CD4-positive, alpha-beta T cell (primary cell): ENCODE measurements at regions of chr6 and their contacts with region 1.

Region 1: DNA sequence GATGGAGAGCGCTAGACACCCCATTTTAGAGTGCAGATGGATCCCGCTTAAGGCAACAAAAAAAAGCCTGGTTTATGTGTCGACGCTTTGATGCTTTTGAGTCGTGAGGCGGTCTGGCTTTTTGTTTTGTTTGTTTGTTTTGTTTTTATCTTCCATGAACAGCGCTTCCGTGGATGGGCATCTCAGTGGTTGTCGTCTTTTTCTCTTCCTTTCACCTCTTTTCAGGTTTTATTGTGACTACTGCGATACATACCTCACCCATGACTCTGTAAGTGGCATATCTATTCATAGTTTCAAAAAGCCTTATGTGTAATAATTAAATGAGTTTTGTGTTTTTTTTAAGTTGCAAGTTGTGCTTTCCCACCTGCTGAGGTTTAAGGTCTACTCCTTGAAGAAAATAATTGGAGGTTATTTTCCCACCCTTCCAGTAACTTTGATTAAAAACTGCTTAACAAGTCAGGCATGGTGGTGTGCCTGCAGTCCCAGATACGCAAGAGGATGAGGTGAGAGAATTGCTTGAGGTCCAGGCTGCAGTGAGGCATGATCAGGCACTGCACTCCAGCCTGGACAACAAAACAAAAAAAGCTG is 476 bp downstream of the SNRPC start:
- DNase-seq: no peak
- ATAC-seq: no peak
- H3K4me3 ChIP-seq: peak overlapping the region; percentile 67
- H3K4me3 Mint-ChIP-seq: no peak overlapping the region
- H3K27ac ChIP-seq: peak overlapping the region; percentile 84 to 88
- H3K27ac Mint-ChIP-seq: no peak overlapping the region
- H3K4me1 ChIP-seq: peaks cover 19% of the 10 kb centered on the region
- H3K4me1 Mint-ChIP-seq: peaks cover 9% of the 10 kb centered on the region
- H3K27me3 ChIP-seq: no peaks in the 10 kb centered on the region
- H3K27me3 Mint-ChIP-seq: no peaks in the 10 kb centered on the region
- CTCF ChIP-seq: no peak

Region 2: DNA sequence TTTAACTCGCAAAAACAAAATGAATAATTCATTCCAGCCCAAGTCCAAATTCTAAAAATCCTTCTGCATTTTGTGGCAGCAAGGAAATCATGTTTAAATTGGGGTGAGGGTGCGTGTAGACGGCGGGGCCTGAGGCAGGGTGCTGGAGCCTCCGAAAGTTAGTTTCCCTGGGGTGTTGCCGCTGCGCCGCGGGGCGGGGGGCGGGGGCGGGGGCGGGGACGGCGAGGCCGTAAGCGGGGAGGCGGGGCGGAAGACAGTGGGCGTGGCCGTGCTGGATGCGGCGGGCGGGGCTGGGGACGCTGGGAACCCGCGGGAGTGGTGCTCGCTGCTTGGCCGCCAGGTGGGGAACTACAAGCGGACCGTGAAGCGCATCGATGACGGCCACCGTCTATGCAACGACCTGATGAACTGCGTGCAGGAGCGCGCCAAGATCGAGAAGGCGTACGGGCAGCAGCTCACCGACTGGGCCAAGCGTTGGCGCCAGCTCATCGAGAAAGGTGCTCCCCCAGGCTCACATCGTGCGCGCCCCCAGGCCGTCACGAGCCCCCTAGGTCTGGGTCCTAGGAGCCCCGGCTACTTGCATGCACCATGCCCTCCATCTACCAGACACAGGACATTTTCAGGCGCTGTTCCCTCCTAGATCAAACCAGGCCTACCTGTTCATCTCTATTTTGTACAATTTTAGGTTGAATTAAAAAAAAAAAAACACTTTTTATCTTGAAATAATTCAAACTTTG is 230.6 kb before region 1 on chr6:
- CTCF ChIA-PET with region 1: no interaction called
- POLR2A ChIA-PET with region 1: no interaction called
- intact Hi-C with region 1: loop called in 1 of 2 experiments (anchors 2 kb)
- DNase-seq: peak; percentile 94 to 99 (median 97)
- ATAC-seq: peak; percentile 98
- H3K4me3 ChIP-seq: peak overlapping the region; percentile 26
- H3K4me3 Mint-ChIP-seq: peak overlapping the region; percentile 54
- H3K27ac ChIP-seq: no peak overlapping the region
- H3K27ac Mint-ChIP-seq: peak overlapping the region; percentile 75
- H3K4me1 ChIP-seq: peaks cover 15% of the 10 kb centered on the region
- H3K4me1 Mint-ChIP-seq: peaks cover 11% of the 10 kb centered on the region
- H3K27me3 ChIP-seq: no peaks in the 10 kb centered on the region
- H3K27me3 Mint-ChIP-seq: no peaks in the 10 kb centered on the region
- CTCF ChIP-seq: peak; percentile 78

Region 3: DNA sequence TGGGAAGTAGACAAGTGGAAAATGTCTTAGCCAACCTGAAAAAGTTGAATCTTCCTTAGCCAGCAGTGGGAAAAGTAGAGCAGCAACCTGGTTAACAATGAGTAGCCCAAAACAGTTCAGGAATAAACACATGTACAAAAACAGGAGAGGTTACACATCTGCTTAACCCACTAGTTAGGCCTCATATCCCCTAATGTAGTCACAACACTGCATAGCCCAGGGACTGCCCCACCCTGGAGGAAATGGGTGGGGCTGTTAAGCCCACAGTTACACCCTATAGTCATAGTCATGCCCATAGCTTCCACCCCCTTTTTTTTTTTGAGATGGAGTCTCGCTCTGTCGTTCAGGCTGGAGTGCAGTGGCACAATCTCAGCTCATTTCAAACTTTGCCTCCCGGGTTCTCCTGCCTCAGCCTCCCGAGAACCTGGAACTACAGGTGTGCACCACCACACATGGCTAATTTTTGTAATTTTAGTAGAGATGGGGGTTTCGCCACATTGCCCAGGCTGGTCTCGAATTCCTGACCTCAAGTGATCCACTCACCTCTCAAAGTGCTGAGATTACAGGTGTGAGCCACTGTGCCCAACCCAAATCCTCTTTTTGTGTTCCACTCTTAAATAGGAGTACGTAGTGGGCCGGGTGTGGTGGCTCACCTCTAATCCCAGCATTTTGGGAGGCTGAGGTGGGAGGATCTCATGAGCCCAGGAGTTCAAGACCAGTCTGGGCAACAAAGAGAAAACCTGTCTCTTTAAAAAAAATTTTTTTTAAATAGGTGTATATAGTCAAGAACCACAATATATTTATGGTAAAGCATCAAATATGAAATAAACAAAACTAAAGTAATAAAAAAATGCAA is 85.8 kb before region 1 on chr6:
- CTCF ChIA-PET with region 1: no interaction called
- POLR2A ChIA-PET with region 1: interaction called, 15 read pairs
- intact Hi-C with region 1: loop called (anchors 2 to 5 kb)
- DNase-seq: peak; percentile 40 to 93 (median 70)
- ATAC-seq: peak; percentile 96
- H3K4me3 ChIP-seq: peak overlapping the region; percentile 14
- H3K4me3 Mint-ChIP-seq: peak overlapping the region; percentile 85
- H3K27ac ChIP-seq: peak overlapping the region; percentile 70 to 81
- H3K27ac Mint-ChIP-seq: peak overlapping the region; percentile 96
- H3K4me1 ChIP-seq: peaks cover 61% of the 10 kb centered on the region
- H3K4me1 Mint-ChIP-seq: peaks cover 70% of the 10 kb centered on the region
- H3K27me3 ChIP-seq: no peaks in the 10 kb centered on the region
- H3K27me3 Mint-ChIP-seq: no peaks in the 10 kb centered on the region
- CTCF ChIP-seq: no peak

Region 4: DNA sequence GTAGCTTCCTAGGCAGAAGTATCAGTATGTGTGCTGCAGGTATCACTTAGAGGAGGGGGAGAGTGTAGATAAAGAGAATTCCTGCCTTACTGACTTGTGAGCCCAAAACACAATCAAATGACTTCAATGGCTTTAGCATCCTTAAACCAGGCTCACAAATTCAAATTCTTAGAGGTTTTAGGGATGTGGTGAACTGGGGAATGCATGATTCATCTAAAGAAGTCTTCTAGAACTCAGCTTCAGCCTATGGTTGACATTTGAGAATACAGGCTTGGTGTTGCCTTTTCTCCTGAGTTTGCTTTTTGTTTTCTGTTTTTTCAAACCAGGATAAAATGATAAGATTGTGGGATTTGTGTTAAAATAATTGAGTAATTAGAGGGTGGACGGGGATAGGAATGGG is 13.9 kb after region 1 on chr6:
- CTCF ChIA-PET with region 1: no interaction called
- POLR2A ChIA-PET with region 1: no interaction called
- intact Hi-C with region 1: no loop called
- DNase-seq: no peak
- ATAC-seq: no peak
- H3K4me3 ChIP-seq: no peak overlapping the region
- H3K4me3 Mint-ChIP-seq: no peak overlapping the region
- H3K27ac ChIP-seq: peak overlapping the region in 1 of 2 donors; percentile 1
- H3K27ac Mint-ChIP-seq: no peak overlapping the region
- H3K4me1 ChIP-seq: peaks cover 4% of the 10 kb centered on the region
- H3K4me1 Mint-ChIP-seq: peaks cover 17% of the 10 kb centered on the region
- H3K27me3 ChIP-seq: no peaks in the 10 kb centered on the region
- H3K27me3 Mint-ChIP-seq: no peaks in the 10 kb centered on the region
- CTCF ChIP-seq: no peak

Region 5: DNA sequence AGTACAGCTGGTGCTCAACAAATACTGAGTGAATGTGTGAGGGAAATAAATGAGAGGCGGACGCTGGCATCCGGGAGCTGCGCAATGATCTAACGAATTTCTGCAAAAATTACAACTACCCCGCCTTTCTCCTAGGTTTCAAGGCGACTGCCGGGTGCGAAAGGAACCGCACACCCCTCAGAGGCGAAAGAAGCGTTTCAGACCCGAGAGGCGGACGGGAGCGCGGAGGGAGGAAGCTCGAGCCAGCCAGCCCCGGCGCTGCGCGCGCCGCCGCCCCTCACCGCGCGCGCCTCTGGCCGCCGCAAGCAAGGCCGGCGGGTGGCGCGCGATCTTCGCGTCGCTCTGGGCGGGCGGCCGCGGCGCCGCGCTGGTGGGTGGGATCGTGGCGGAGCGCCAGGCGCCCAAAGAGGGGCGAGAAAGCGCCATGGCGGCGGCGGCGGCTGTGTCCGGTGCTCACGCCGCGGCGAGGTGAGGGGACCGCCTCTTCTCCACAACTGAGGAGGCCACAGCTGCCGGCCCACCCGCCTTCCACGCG is 34.0 kb after region 1 on chr6 and contains the start of gene BLTP3A:
- CTCF ChIA-PET with region 1: interaction called, 3 read pairs
- POLR2A ChIA-PET with region 1: interaction called, 57 read pairs
- intact Hi-C with region 1: loop called (anchors 1 to 2 kb)
- DNase-seq: peak; percentile 51 to 91 (median 71)
- ATAC-seq: peak; percentile 91
- H3K4me3 ChIP-seq: peak within 1 kb of the TSS; percentile 77
- H3K4me3 Mint-ChIP-seq: peak within 1 kb of the TSS; percentile 99
- H3K27ac ChIP-seq: peak within 1 kb of the TSS; percentile 44 to 73
- H3K27ac Mint-ChIP-seq: peak within 1 kb of the TSS; percentile 97
- H3K4me1 ChIP-seq: peaks cover 22% of the 10 kb centered on the region
- H3K4me1 Mint-ChIP-seq: peaks cover 26% of the 10 kb centered on the region
- H3K27me3 ChIP-seq: no peaks in the 10 kb centered on the region
- H3K27me3 Mint-ChIP-seq: no peaks in the 10 kb centered on the region
- CTCF ChIP-seq: peak; percentile 29
- total RNA-seq, gene BLTP3A: 7.6 to 8.1 TPM